ENCODE measurements at regions of chr16 and their contacts with region 1.

Region 1: DNA sequence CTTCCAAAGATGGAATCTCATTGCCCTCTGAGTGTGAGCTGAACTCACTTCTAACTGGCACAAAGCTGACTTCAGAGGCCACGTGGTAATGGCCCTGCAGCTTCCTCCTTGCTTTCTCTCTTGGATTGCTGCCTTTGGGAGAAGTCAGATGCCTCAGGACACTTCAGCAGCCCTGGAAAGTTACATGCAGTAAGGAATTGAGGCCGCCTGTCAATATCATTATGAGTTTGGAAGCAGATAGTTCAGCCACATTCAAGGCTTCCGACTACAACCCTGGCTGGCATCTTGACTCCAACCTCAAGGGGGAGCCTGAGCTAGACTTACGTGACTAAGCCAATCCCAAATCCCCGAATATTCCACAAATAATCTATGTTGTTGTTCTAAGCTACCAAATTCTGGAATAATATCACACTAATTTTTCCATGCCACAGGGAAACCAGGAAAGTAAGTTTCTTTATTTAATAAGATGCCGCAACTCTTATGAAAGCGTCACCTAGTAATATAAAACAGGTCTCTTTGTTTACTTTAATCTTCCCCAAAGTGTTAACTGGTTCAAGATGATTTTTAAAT is 13.6 kb downstream of the CEP20 start:
- DNase-seq: no peak
- H3K4me3 ChIP-seq: no peak overlapping the region
- H3K27ac ChIP-seq: no peak overlapping the region
- H3K4me1 ChIP-seq: no peaks in the 10 kb centered on the region
- H3K27me3 ChIP-seq: no peaks in the 10 kb centered on the region
- CTCF ChIP-seq: peak in 2 of 3 experiments; percentile 17 to 45
- POLR2A ChIP-seq: no peak

Region 2: DNA sequence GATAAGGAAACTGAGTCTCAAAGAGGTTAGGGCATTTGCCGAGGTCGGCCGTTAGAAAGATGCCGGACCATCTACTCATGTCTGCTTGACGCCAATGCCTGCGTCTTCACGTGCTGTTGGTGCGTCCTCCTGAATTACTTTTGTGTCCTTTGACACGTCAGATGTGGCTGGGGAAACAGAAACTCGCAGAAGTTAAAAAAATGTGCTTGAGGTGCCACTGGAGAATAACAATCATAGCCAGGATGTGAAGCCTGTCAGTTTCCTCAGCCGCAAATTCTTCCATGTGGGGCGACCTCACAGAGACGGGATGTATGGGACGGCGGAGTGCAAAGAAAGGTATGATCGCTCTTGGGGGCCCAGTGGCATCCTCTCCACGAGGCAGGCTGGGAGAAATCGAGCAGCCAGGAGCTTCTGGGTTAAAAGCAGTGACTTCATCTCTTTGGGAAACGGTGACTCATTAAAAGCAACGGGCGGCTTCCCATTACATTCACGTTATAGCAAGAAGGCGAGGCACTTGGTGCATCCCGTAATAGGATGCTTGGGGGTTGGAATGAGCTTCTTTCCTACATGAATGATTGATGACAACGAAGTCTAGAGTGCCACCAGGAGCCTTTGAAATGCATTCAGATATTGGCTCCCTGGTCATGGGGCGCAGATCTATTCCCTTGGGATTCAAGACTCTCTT is 372.6 kb before region 1 on chr16:
- intact Hi-C with region 1: no loop called
- DNase-seq: no peak
- H3K4me3 ChIP-seq: no peak overlapping the region
- H3K27ac ChIP-seq: peak overlapping the region; percentile 48
- H3K4me1 ChIP-seq: peaks cover 13% of the 10 kb centered on the region
- H3K27me3 ChIP-seq: no peaks in the 10 kb centered on the region
- CTCF ChIP-seq: no peak
- POLR2A ChIP-seq: no peak

Region 3: DNA sequence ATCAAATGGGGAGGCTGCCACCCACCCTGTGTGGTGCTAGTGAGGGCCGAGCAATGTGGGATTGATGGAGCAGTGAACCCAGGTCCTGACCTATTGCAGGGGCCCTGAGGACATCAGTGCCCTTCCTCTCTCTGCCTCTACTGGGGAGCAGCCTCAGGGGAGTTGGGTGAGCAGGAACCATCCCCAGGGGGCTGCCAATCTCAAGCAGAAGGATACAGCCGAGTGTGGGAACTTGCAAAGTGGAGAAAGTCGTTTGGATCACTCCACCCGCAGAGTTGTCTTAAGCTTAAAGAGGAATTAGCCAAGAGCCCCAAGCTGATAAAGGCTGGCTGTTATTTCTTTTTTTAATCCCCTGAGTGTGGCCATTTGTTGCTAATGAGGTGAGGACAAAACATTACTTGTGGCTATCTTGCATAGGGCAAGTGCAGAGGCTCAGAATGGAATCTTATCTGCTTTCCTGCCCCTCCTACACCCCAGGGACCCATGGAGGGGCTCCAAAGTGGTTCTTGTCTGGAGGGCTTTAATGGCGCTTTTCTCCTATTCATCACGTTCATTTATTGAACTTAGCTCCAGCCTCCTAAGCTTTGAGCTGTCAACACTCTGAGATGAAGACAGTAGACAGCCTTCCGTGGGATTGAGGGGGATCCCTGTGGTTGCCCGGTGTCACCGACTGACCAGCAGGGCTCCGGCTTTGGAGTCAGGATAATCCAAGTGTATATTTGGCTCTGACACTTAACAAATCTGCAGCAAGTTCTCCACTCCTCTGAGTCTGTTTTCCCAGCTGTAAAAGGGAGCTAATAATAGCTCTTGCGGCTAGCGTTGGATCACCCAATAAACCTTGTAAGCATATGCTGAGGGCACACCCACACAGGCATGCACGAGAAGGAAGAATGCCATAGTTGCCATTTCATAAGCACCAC is 63.1 kb before region 1 on chr16:
- intact Hi-C with region 1: no loop called
- DNase-seq: no peak
- H3K4me3 ChIP-seq: no peak overlapping the region
- H3K27ac ChIP-seq: peak overlapping the region; percentile 53
- H3K4me1 ChIP-seq: peaks cover 33% of the 10 kb centered on the region
- H3K27me3 ChIP-seq: no peaks in the 10 kb centered on the region
- CTCF ChIP-seq: no peak
- POLR2A ChIP-seq: no peak

Region 4: DNA sequence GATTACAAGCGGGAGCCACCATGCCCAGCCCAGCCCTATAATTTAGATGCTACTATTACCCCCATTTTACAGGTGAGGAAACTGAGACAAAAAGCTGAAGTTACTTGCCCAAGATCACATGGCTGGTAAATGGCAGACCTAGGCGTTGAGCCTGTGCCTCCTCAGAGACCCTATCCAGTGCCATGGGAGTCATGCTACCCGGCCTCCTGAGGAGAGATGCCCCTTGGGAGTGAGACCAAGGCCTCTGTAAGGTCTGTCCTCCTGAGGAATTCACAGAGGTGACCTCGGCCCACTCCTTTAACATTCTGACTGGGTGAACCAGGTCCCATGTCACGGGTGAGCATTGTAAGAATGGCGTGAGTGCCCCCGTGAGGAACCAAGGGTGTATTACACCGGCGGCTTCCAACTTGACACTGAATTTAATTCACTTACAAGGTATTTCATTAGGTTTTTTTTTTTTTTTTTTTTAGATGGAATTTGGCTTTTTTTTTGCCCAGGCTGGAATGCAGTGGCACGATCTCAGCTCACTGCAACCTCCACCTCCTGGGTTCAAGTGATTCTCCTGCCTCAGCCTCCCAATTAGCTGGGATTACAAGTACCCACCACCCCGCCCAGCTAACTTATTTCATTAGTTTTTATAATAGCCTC is 252.8 kb after region 1 on chr16:
- intact Hi-C with region 1: loop called (anchors 5 kb)
- DNase-seq: no peak
- H3K4me3 ChIP-seq: no peak overlapping the region
- H3K27ac ChIP-seq: no peak overlapping the region
- H3K4me1 ChIP-seq: no peaks in the 10 kb centered on the region
- H3K27me3 ChIP-seq: no peaks in the 10 kb centered on the region
- CTCF ChIP-seq: peak; percentile 80 to 88 (median 84)
- POLR2A ChIP-seq: no peak

Measured in vagina (tissue), 2 donors.